ENCODE measurements at regions of chr19 and their contacts with region 1.

Region 1: GRCh38 chr19:54390942-54391577 is 24.2 kb upstream of the TTYH1 start:
- DNase-seq: peak; percentile 76
- ATAC-seq: no peak
- H3K4me3 Mint-ChIP-seq: no peak overlapping the region
- H3K27ac Mint-ChIP-seq: no peak overlapping the region
- H3K4me1 Mint-ChIP-seq: peaks cover 29% of the 10 kb centered on the region
- H3K27me3 Mint-ChIP-seq: peaks cover 14% of the 10 kb centered on the region

Region 2: GRCh38 chr19:54266133-54266532 is 124.9 kb before region 1 on chr19:
- CTCF ChIA-PET with region 1: interaction called, 32 read pairs
- POLR2A ChIA-PET with region 1: no interaction called
- intact Hi-C with region 1: no loop called
- DNase-seq: peak; percentile 88
- ATAC-seq: peak; percentile 74
- H3K4me3 Mint-ChIP-seq: no peak overlapping the region
- H3K27ac Mint-ChIP-seq: no peak overlapping the region
- H3K4me1 Mint-ChIP-seq: no peaks in the 10 kb centered on the region
- H3K27me3 Mint-ChIP-seq: peaks cover 24% of the 10 kb centered on the region

Region 3: GRCh38 chr19:54316746-54317107 is 74.3 kb before region 1 on chr19:
- CTCF ChIA-PET with region 1: interaction called, 13 read pairs
- POLR2A ChIA-PET with region 1: no interaction called
- intact Hi-C with region 1: no loop called
- DNase-seq: no peak
- ATAC-seq: no peak
- H3K4me3 Mint-ChIP-seq: no peak overlapping the region
- H3K27ac Mint-ChIP-seq: no peak overlapping the region
- H3K4me1 Mint-ChIP-seq: no peaks in the 10 kb centered on the region
- H3K27me3 Mint-ChIP-seq: peaks cover 13% of the 10 kb centered on the region

Region 4: DNA sequence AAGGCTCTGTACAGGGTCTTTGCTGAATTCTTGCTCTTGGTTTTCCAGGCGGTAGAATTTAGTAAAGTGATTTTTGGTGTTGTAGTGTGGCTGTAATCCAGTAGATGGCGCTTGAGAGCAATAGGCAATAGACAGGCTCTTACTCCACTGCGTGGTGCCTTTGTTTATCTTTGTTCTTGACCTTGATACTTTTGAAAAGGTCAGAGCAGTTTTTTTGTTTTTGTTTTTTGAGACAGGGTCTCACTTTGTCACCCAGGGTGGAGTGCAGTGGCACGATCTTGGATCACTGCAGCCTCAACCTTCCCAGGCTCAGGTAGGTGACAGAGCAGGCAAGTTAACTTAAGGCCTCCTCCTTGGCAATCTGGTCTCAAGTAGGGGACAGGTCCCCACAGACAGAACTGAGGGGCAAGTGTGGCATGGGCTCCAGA is 65.9 kb before region 1 on chr19:
- CTCF ChIA-PET with region 1: interaction called, 30 read pairs
- POLR2A ChIA-PET with region 1: no interaction called
- intact Hi-C with region 1: loop called (anchors 1 kb)
- DNase-seq: peak; percentile 56
- ATAC-seq: peak; percentile 72
- H3K4me3 Mint-ChIP-seq: no peak overlapping the region
- H3K27ac Mint-ChIP-seq: no peak overlapping the region
- H3K4me1 Mint-ChIP-seq: peaks cover 19% of the 10 kb centered on the region
- H3K27me3 Mint-ChIP-seq: peaks cover 10% of the 10 kb centered on the region

Region 5: GRCh38 chr19:54357381-54357780 is 33.7 kb before region 1 on chr19:
- CTCF ChIA-PET with region 1: interaction called, 12 read pairs
- POLR2A ChIA-PET with region 1: no interaction called
- intact Hi-C with region 1: loop called (anchors 2 to 5 kb)
- DNase-seq: no peak
- ATAC-seq: no peak
- H3K4me3 Mint-ChIP-seq: no peak overlapping the region
- H3K27ac Mint-ChIP-seq: no peak overlapping the region
- H3K4me1 Mint-ChIP-seq: peaks cover 22% of the 10 kb centered on the region
- H3K27me3 Mint-ChIP-seq: no peaks in the 10 kb centered on the region

Region 6: DNA sequence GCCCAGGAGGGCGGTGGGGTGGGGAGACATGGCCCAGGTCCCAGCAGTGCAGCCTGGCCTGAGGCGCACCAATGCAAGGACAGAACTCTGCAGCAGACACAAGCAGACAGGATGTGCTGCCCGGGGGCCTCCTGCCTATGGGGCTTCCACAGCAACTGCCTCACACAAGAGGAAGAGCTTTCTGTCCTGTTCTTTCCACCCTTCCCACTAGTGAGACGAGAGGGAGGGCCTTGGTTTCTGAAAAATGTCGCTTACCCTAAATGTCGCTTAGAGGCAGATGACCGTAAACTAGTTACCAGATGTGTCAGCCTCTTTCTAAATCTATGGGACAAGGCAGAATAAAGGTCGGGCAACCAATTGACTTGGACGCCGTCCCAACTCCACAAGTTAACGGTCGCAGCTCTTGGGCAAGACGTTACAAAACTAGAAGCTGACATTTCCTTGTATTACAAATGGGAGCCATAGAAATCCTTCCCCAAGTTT is 26.2 kb before region 1 on chr19 and contains the start of gene LAIR1:
- CTCF ChIA-PET with region 1: interaction called, 6 read pairs
- POLR2A ChIA-PET with region 1: no interaction called
- intact Hi-C with region 1: loop called in 1 of 2 experiments (anchors 2 kb)
- DNase-seq: peak; percentile 68
- ATAC-seq: peak; percentile 81
- H3K4me3 Mint-ChIP-seq: peak within 1 kb of the TSS; percentile 81
- H3K27ac Mint-ChIP-seq: peak within 1 kb of the TSS; percentile 85
- H3K4me1 Mint-ChIP-seq: peaks cover 60% of the 10 kb centered on the region
- H3K27me3 Mint-ChIP-seq: peaks cover 3% of the 10 kb centered on the region
- total RNA-seq, gene LAIR1: 3.5 to 4.7 TPM